ENCODE measurements at regions of chr10 and their contacts with region 1.

Region 1: GRCh38 chr10:22103701-22104470 is 100.4 kb upstream of the DNAJC1 start:
- DNase-seq: no peak
- ATAC-seq: peak; percentile 63
- H3K4me3 ChIP-seq: no peak overlapping the region
- H3K27ac ChIP-seq: no peak overlapping the region
- H3K4me1 ChIP-seq: no peaks in the 10 kb centered on the region
- H3K27me3 ChIP-seq: no peaks in the 10 kb centered on the region
- CTCF ChIP-seq: peak; percentile 27 to 44 (median 39); a peak in 4 of 6 replicates
- EP300 ChIP-seq: no peak
- POLR2A ChIP-seq: no peak
- RAD21 ChIP-seq: peak; percentile 56

Region 2: GRCh38 chr10:22022257-22023032 is 81.4 kb before region 1 on chr10:
- CTCF ChIA-PET with region 1: no interaction called
- POLR2A ChIA-PET with region 1: no interaction called
- RAD21 ChIA-PET with region 1: no interaction called
- SMC1A ChIA-PET with region 1: no interaction called
- in situ Hi-C with region 1: no loop called
- intact Hi-C with region 1: no loop called
- DNase-seq: no peak
- ATAC-seq: peak; percentile 58
- H3K4me3 ChIP-seq: no peak overlapping the region
- H3K27ac ChIP-seq: no peak overlapping the region
- H3K4me1 ChIP-seq: no peaks in the 10 kb centered on the region
- H3K27me3 ChIP-seq: no peaks in the 10 kb centered on the region
- CTCF ChIP-seq: no peak
- EP300 ChIP-seq: no peak
- POLR2A ChIP-seq: peak; percentile 50; the same call in 1 of the 2 replicates
- RAD21 ChIP-seq: no peak

Region 3: DNA sequence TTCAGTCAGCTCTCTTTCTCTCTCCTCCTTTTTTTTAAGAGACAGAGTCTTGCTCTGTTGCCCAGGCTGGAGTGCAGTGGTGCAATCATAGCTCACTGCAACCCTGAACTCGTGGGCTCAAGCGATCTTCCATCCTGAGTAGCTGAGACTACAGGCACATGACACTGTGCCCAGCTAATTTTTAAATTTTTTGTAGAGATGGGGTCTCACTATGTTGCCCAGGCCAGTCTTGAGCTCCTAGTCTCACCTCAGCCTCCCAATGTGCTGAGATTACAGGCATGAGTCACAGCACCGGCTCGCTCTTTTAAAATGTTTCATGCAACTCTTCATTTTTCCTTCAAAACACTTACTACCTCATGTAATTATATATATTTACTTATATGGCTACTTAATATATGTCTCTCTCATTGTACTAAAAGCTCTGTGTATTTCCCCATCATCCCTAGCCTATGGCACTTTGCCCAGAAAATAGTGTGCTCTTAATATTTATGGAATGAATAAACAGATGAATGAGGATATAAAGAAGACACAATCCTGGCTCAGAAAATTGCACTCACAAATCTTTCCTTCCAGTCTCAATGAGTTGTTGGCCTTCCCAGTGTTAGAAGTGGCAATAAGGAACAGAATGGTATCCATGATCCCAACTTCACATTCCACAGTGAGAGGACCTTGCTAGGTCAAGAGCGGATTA is 80.0 kb after region 1 on chr10:
- CTCF ChIA-PET with region 1: no interaction called
- POLR2A ChIA-PET with region 1: no interaction called
- RAD21 ChIA-PET with region 1: no interaction called
- SMC1A ChIA-PET with region 1: no interaction called
- in situ Hi-C with region 1: no loop called
- intact Hi-C with region 1: no loop called
- DNase-seq: no peak
- ATAC-seq: no peak
- H3K4me3 ChIP-seq: no peak overlapping the region
- H3K27ac ChIP-seq: no peak overlapping the region
- H3K4me1 ChIP-seq: no peaks in the 10 kb centered on the region
- H3K27me3 ChIP-seq: no peaks in the 10 kb centered on the region; a peak in 1 of 4 replicates
- CTCF ChIP-seq: no peak
- EP300 ChIP-seq: no peak
- POLR2A ChIP-seq: no peak
- RAD21 ChIP-seq: no peak

Region 4: GRCh38 chr10:22414146-22414545 is 310.3 kb after region 1 on chr10:
- CTCF ChIA-PET with region 1: no interaction called
- POLR2A ChIA-PET with region 1: no interaction called
- RAD21 ChIA-PET with region 1: no interaction called
- SMC1A ChIA-PET with region 1: no interaction called
- in situ Hi-C with region 1: no loop called
- intact Hi-C with region 1: loop called (anchors 10 kb)
- DNase-seq: no peak
- ATAC-seq: no peak
- H3K4me3 ChIP-seq: no peak overlapping the region
- H3K27ac ChIP-seq: no peak overlapping the region
- H3K4me1 ChIP-seq: no peaks in the 10 kb centered on the region
- H3K27me3 ChIP-seq: no peaks in the 10 kb centered on the region
- CTCF ChIP-seq: no peak
- EP300 ChIP-seq: no peak
- POLR2A ChIP-seq: no peak
- RAD21 ChIP-seq: no peak

Measured in GM12878 (cell line).